Activated CD4-positive, alpha-beta T cell treated with anti-CD3 and anti-CD28 coated beads for 36 hours (primary cell): ENCODE measurements at regions of chr4 and their contacts with region 1.

Region 1: DNA sequence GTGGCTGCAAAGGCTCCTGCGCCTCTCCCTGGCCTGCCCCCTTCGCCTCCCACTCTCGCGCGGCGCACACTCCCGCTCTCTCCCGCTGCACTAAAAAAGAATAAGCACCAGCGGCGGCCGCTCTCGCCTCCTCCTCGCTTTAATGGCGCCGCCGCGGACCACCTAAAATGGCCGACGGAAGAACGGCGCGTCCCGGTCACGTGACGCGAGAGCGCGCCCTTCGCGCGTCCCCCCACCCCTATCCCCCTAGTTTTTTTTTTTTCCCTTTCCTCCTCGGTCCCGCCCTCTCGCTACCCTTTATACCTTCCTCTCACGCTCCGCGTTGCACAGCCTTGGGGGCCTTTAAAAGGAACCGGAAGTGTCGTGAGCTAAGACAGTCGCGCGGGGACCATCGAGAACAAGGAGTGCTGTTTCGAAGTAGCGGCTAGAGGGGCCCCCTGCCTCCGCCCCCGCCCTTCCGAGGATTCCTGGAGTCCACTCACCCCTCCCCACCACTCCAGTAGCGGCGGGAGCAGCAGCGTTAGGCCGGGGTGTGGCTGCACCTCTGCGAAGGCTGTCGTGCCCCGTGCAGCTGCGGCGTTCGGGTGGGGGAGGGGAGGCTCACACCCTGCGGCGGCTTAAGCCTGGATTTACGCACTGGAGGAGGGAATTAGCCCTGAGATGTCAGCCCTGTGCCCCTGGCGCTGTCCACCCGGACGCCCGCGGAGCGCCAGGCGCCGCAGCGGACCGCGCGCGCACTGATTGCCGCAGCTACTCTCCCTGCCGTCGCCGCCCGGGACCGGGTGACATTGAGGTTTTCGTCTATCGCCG is at the start of gene HNRNPD:
- DNase-seq: peak; percentile 97
- ATAC-seq: peak; percentile 90
- H3K4me3 Mint-ChIP-seq: peak within 1 kb of the TSS; percentile 89
- H3K27ac Mint-ChIP-seq: peak within 1 kb of the TSS; percentile 99
- H3K4me1 Mint-ChIP-seq: peaks cover 34% of the 10 kb centered on the region
- H3K27me3 Mint-ChIP-seq: no peaks in the 10 kb centered on the region
- total RNA-seq, gene HNRNPD: 505 to 510 TPM

Region 2: GRCh38 chr4:82284858-82285805 is 88.9 kb before region 1 on chr4:
- CTCF ChIA-PET with region 1: interaction called, 10 read pairs
- POLR2A ChIA-PET with region 1: no interaction called
- intact Hi-C with region 1: loop called (anchors 1 to 2 kb)
- DNase-seq: peak; percentile 100
- ATAC-seq: peak; percentile 99
- H3K4me3 Mint-ChIP-seq: peak overlapping the region; percentile 68
- H3K27ac Mint-ChIP-seq: peak overlapping the region; percentile 62
- H3K4me1 Mint-ChIP-seq: peaks cover 13% of the 10 kb centered on the region
- H3K27me3 Mint-ChIP-seq: no peaks in the 10 kb centered on the region

Region 3: DNA sequence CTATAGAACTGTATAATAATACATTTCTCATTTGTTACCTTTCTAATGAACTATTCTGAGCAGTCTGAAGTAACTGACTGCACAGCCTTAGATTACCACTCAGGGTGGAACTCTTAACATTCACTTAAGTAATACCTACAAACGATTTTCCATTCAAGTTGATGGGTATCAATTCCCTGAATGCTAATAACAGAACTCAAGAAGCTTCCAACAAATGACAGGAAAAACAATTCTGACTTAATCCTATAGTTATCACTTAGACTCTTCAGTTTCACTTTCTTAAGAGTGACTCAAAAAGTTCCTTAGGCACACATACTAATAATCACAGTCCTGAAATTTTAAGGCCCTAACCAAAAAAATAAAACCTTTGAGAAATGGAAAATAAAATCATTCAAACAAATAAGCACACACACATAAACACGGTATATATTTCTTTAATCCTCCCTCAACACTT is 21.1 kb before region 1 on chr4:
- CTCF ChIA-PET with region 1: interaction called, 3 read pairs
- POLR2A ChIA-PET with region 1: interaction called, 3 read pairs
- intact Hi-C with region 1: loop called (anchors 1 to 2 kb)
- DNase-seq: no peak
- ATAC-seq: peak; percentile 74
- H3K4me3 Mint-ChIP-seq: peak overlapping the region; percentile 7
- H3K27ac Mint-ChIP-seq: peak overlapping the region; percentile 74
- H3K4me1 Mint-ChIP-seq: peaks cover 50% of the 10 kb centered on the region
- H3K27me3 Mint-ChIP-seq: no peaks in the 10 kb centered on the region

Region 4: GRCh38 chr4:82360298-82361177 is 13.5 kb before region 1 on chr4:
- CTCF ChIA-PET with region 1: interaction called, 29 read pairs
- POLR2A ChIA-PET with region 1: no interaction called
- intact Hi-C with region 1: no loop called
- DNase-seq: no peak
- ATAC-seq: peak; percentile 42
- H3K4me3 Mint-ChIP-seq: no peak overlapping the region
- H3K27ac Mint-ChIP-seq: no peak overlapping the region
- H3K4me1 Mint-ChIP-seq: peaks cover 79% of the 10 kb centered on the region
- H3K27me3 Mint-ChIP-seq: no peaks in the 10 kb centered on the region

Region 5: DNA sequence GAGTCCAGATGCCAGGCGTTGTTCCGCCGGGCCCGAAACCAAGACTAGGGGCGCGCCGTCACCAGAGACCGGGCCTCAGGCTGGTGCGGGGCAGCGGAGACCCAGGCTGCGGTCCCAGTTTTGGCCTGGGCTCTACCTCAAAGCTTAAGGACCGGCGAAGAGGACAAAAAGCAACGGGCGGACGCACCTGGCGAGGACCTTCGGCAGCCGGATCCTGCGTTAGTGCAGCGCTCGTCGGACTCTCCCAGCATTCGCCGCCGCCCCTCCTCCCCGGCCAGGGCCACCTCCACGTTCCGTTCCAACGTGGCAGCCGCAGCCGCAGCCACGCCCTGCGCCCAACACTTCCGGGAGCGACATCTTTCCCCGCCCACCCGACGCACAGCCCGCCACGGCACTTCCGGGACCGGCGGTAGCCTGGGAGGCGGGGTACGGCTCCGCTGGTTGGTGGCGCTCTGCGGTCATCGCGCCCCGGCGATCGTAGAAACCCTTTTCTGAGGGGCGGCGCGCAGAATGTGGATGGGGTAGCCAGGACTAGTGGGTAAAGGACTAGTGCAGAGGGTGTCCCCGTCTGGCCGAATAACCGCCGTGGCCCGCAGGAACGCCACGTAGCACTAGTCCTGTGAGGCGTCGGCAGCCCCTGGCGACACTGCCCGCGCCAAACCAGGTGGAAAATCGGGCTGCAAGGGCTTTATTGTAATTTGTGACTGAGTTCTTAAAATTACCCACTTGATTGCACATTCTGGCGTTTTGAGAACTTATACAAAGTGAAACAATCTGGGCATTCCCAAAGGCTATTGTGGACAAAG is 517.1 kb after region 1 on chr4 and contains the start of gene SEC31A:
- CTCF ChIA-PET with region 1: no interaction called
- POLR2A ChIA-PET with region 1: no interaction called
- intact Hi-C with region 1: loop called (anchors 1 kb)
- DNase-seq: peak; percentile 99
- ATAC-seq: peak; percentile 94
- H3K4me3 Mint-ChIP-seq: peak within 1 kb of the TSS; percentile 81
- H3K27ac Mint-ChIP-seq: peak within 1 kb of the TSS; percentile 89
- H3K4me1 Mint-ChIP-seq: peaks cover 42% of the 10 kb centered on the region
- H3K27me3 Mint-ChIP-seq: no peaks in the 10 kb centered on the region
- total RNA-seq, gene SEC31A: 80.3 to 124 TPM

Region 6: DNA sequence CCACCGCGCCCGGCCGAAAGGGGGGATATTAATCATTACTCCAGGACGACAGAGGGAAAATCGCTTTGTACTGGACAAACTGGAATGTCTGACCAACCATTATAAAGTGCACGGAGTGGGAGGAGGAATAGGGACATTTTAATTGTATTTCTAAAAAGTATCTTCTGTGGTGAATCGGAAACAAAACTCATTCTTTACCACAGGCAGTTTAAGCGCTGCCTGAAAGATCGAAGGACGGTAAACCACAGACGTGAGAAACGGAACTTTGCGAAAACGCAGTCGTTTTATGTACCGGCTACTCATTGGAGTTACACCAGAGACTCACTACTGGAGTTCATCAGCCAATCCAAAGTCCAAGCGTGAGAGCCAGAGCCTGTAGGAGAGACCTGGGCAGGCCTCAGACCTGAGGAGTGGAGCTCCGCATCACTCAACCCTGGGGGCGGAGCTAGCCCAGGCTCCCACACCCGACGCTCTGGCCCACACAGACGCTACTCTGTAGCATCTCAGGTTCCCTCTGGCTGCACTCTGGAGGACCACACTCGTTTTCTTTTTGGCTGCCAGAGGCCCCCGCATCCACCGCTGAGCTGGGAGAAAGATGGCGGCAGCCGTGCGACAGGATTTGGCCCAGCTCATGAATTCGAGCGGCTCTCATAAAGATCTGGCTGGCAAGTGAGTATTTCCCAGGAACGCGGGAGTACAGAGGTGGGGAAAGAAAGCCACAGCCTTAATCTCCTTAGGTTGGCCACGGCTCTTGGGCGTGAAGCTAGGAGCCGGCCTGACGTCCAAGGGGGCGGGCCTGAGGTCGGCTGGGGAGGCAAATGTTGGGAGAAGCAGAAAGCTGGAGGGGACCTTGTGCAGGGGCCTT is 660.8 kb after region 1 on chr4 and contains the start of gene COPS4:
- CTCF ChIA-PET with region 1: no interaction called
- POLR2A ChIA-PET with region 1: no interaction called
- intact Hi-C with region 1: loop called in 1 of 2 experiments (anchors 1 kb)
- DNase-seq: peak; percentile 97
- ATAC-seq: peak; percentile 97
- H3K4me3 Mint-ChIP-seq: peak within 1 kb of the TSS; percentile 91
- H3K27ac Mint-ChIP-seq: peak within 1 kb of the TSS; percentile 94
- H3K4me1 Mint-ChIP-seq: peaks cover 22% of the 10 kb centered on the region
- H3K27me3 Mint-ChIP-seq: no peaks in the 10 kb centered on the region
- total RNA-seq, gene COPS4: 35.7 to 35.9 TPM